GM12878 (cell line): ENCODE measurements at regions of chrX and their contacts with region 1.

Region 1: GRCh38 chrX:16123222-16123786 is at the start of gene GRPR:
- DNase-seq: no peak
- ATAC-seq: peak; percentile 88
- H3K4me3 ChIP-seq: no peak within 1 kb of the TSS
- H3K27ac ChIP-seq: no peak within 1 kb of the TSS
- H3K4me1 ChIP-seq: peaks cover 15% of the 10 kb centered on the region
- H3K27me3 ChIP-seq: peaks cover 0 to 2% of the 10 kb centered on the region in 2 experiments; a peak in 1 of 4 replicates
- CTCF ChIP-seq: peak; percentile 76 to 83 (median 79)
- EP300 ChIP-seq: no peak
- POLR2A ChIP-seq: no peak
- RAD21 ChIP-seq: peak; percentile 61
- polyA plus RNA-seq, gene GRPR: 0.21 TPM in 1 of 2 experiments, not detected in the other

Region 2: GRCh38 chrX:15930585-15930984 is 192.7 kb before region 1 on chrX:
- CTCF ChIA-PET with region 1: interaction called, 13 read pairs
- POLR2A ChIA-PET with region 1: no interaction called
- RAD21 ChIA-PET with region 1: interaction called, 9 read pairs
- SMC1A ChIA-PET with region 1: interaction called, 3 read pairs
- in situ Hi-C with region 1: no loop called
- intact Hi-C with region 1: no loop called
- DNase-seq: peak; percentile 13
- ATAC-seq: peak; percentile 71
- H3K4me3 ChIP-seq: no peak overlapping the region
- H3K27ac ChIP-seq: no peak overlapping the region
- H3K4me1 ChIP-seq: no peaks in the 10 kb centered on the region
- H3K27me3 ChIP-seq: no peaks in the 10 kb centered on the region
- CTCF ChIP-seq: peak; percentile 22 to 29 (median 27); a peak in 3 of 6 replicates
- EP300 ChIP-seq: no peak
- POLR2A ChIP-seq: no peak
- RAD21 ChIP-seq: peak; percentile 73

Region 3: GRCh38 chrX:16039834-16040233 is 83.5 kb before region 1 on chrX:
- CTCF ChIA-PET with region 1: interaction called, 8 read pairs
- POLR2A ChIA-PET with region 1: no interaction called
- RAD21 ChIA-PET with region 1: no interaction called
- SMC1A ChIA-PET with region 1: interaction called, 6 read pairs
- in situ Hi-C with region 1: no loop called
- intact Hi-C with region 1: loop called (anchors 5 kb)
- DNase-seq: no peak
- ATAC-seq: peak; percentile 83
- H3K4me3 ChIP-seq: no peak overlapping the region
- H3K27ac ChIP-seq: peak overlapping the region; percentile 8; the same call in 1 of the 2 replicates
- H3K4me1 ChIP-seq: peaks cover 3% of the 10 kb centered on the region; the same call in 1 of the 2 replicates
- H3K27me3 ChIP-seq: no peaks in the 10 kb centered on the region
- CTCF ChIP-seq: no peak
- EP300 ChIP-seq: no peak
- POLR2A ChIP-seq: no peak
- RAD21 ChIP-seq: no peak

Region 4: DNA sequence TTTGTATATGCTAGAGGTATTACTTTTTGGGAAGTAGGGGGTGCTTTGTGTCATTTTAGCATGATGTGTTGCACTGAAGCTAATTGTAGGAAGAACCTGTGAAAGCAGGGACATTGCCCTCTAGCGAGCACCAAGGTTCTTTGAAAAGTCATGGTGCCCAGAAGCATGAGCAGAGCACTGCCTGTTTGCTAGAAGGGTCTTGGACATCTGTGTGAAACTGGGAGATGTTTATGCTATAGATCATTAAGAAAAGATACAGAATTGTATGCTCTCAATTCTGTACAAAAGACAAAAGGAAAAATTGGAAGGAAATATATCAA is 14.8 kb after region 1 on chrX:
- CTCF ChIA-PET with region 1: interaction called, 118 read pairs
- POLR2A ChIA-PET with region 1: no interaction called
- RAD21 ChIA-PET with region 1: interaction called, 7 read pairs
- SMC1A ChIA-PET with region 1: interaction called, 42 read pairs
- in situ Hi-C with region 1: no loop called
- intact Hi-C with region 1: loop called (anchors 1 kb)
- DNase-seq: peak; percentile 16
- ATAC-seq: peak; percentile 82
- H3K4me3 ChIP-seq: no peak overlapping the region
- H3K27ac ChIP-seq: no peak overlapping the region
- H3K4me1 ChIP-seq: peaks cover 3% of the 10 kb centered on the region
- H3K27me3 ChIP-seq: peaks cover 0 to 2% of the 10 kb centered on the region in 2 experiments; a peak in 3 of 4 replicates
- CTCF ChIP-seq: peak; percentile 44 to 52 (median 51); a peak in 5 of 6 replicates
- EP300 ChIP-seq: no peak
- POLR2A ChIP-seq: no peak
- RAD21 ChIP-seq: peak; percentile 57

Region 5: GRCh38 chrX:16267431-16267830 is 144.1 kb after region 1 on chrX:
- CTCF ChIA-PET with region 1: no interaction called
- POLR2A ChIA-PET with region 1: no interaction called
- RAD21 ChIA-PET with region 1: no interaction called
- SMC1A ChIA-PET with region 1: no interaction called
- in situ Hi-C with region 1: no loop called
- intact Hi-C with region 1: no loop called
- DNase-seq: no peak
- ATAC-seq: no peak
- H3K4me3 ChIP-seq: no peak overlapping the region
- H3K27ac ChIP-seq: no peak overlapping the region
- H3K4me1 ChIP-seq: no peaks in the 10 kb centered on the region
- H3K27me3 ChIP-seq: no peaks in the 10 kb centered on the region
- CTCF ChIP-seq: no peak
- EP300 ChIP-seq: no peak
- POLR2A ChIP-seq: no peak
- RAD21 ChIP-seq: no peak

Region 6: GRCh38 chrX:16347968-16348670 is 224.8 kb after region 1 on chrX:
- CTCF ChIA-PET with region 1: no interaction called
- POLR2A ChIA-PET with region 1: no interaction called
- RAD21 ChIA-PET with region 1: no interaction called
- SMC1A ChIA-PET with region 1: no interaction called
- in situ Hi-C with region 1: no loop called
- intact Hi-C with region 1: no loop called
- DNase-seq: no peak
- ATAC-seq: no peak
- H3K4me3 ChIP-seq: no peak overlapping the region
- H3K27ac ChIP-seq: no peak overlapping the region
- H3K4me1 ChIP-seq: no peaks in the 10 kb centered on the region
- H3K27me3 ChIP-seq: no peaks in the 10 kb centered on the region
- CTCF ChIP-seq: no peak
- EP300 ChIP-seq: no peak
- POLR2A ChIP-seq: no peak
- RAD21 ChIP-seq: no peak